ENCODE measurements at regions of chr9 and their contacts with region 1.

Region 1: DNA sequence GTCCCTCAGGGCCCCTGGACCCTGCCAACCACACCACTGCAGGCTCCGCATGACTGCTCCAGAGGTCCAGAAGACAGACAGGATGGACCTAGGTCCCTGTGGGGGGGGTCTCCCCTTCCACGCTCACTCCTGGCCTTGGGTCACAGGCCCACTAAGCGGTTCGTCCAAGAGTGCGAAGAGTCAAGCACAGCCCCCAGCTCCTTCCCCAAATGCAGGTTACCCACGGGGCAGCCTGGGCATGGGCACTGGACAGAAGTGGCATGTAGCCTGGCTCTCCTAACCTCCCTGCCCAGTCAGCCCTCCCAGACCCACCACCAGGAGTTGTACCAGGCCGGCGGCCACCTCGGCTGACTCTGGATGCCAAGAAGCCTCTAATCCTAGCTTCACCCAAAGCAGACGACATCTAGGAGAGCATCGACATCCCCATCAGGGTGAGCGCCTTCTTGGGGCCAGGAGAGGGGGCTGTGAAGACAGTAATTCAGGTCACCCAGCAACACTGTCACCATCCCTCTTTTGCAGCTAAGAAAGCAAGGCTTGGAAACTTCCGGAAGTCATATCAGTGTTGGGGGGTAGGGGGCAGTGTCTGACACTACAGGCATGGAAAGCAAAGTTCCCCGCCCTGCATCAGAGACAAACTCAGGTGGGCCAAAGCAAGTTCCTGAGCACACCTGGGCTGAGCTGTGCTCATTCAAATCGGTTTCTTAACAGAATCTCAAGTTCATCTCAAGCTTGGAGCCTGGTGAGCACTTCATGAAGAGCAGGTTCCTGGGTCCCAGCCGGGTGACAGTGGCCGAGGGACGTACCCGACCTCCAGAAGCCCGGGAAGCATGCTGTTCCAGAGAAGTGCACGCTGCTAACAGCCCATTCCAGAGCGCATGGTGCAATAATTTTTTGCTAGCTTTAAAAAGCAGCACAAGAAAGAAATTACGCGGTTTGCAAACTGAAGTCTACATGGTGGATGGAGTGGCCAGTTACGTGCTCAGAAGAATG is 68.7 kb downstream of the SEMA4D start:
- DNase-seq: peak; percentile 75
- ATAC-seq: peak; percentile 47
- H3K4me3 Mint-ChIP-seq: no peak overlapping the region
- H3K27ac Mint-ChIP-seq: peak overlapping the region; percentile 88
- H3K4me1 Mint-ChIP-seq: peaks cover 97% of the 10 kb centered on the region
- H3K27me3 Mint-ChIP-seq: no peaks in the 10 kb centered on the region

Region 2: DNA sequence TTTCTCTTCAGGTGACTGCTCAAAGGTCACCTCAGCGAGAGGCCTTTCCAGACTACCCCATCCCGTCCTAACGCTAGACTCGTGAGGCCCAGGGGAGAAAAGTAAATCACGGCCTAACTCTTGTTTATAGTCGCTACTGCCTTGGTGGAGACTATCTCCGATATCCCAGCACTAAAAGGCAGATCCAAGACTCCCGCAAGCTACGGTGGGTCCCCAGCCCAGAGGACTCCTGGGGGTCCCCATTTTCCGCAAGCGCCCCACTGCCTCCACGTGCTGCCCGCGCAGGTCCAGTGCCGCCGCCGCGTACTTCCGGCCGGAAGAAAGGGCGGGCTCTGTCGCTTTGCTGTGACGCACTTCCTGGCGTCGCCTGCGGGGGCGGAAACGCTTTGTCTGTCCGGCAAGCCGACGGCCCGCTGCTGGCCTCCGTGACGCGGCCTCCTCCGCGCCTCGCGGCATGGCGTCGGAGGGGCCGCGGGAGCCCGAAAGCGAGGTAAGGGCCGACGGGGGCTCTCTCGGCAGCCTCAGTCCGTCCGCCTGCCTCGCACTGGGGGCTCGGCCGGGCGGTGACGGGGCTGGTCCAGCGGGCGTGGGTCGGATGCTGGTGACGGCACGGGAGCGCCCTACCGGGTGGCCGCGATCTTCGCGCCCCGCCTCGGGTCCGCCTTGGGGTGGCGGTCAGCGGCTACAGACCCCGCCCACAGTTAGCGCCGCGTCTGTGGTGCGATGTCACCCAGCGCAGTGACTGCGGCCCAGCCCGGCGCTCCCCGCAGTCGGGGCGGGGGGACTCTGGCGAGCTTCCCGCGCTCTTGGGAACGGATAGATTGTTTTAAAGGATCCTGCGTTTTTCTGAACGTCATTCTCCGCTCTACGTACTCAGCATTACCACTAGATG is 110.8 kb before region 1 on chr9 and contains the start of gene SECISBP2:
- CTCF ChIA-PET with region 1: no interaction called
- POLR2A ChIA-PET with region 1: no interaction called
- intact Hi-C with region 1: loop called in 1 of 2 experiments (anchors 1 kb)
- DNase-seq: peak; percentile 97
- ATAC-seq: peak; percentile 90
- H3K4me3 Mint-ChIP-seq: peak within 1 kb of the TSS; percentile 82
- H3K27ac Mint-ChIP-seq: peak within 1 kb of the TSS; percentile 98
- H3K4me1 Mint-ChIP-seq: peaks cover 79% of the 10 kb centered on the region
- H3K27me3 Mint-ChIP-seq: no peaks in the 10 kb centered on the region
- total RNA-seq, gene SECISBP2: 38.6 to 49.9 TPM

Region 3: GRCh38 chr9:89418882-89419640 is 10.1 kb before region 1 on chr9:
- CTCF ChIA-PET with region 1: interaction called, 10 read pairs
- POLR2A ChIA-PET with region 1: interaction called, 3 read pairs
- intact Hi-C with region 1: loop called in 1 of 2 experiments (anchors 1 kb)
- DNase-seq: peak; percentile 85
- ATAC-seq: peak; percentile 22
- H3K4me3 Mint-ChIP-seq: peak overlapping the region; percentile 74
- H3K27ac Mint-ChIP-seq: peak overlapping the region; percentile 88
- H3K4me1 Mint-ChIP-seq: peaks cover 93% of the 10 kb centered on the region
- H3K27me3 Mint-ChIP-seq: no peaks in the 10 kb centered on the region

Region 4: DNA sequence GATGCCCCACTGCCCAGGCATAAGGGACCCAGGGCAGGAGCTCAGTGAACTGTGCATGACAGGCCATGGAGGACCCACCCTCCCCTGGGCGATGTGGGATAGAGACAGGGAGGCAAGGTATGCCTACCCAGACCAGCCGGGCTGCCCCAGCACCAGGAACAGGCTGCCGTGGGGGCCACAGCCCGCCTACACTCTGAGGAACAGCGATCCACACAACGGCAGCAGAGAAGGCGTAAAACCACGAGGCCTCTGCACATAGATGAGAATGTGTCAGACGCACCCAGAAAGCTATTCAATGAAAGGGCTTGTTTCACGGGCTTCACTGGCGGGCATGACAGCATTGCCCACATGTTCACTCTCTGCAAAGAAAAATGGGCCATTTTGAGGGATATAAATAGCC is 19.2 kb after region 1 on chr9:
- CTCF ChIA-PET with region 1: interaction called, 118 read pairs
- POLR2A ChIA-PET with region 1: interaction called, 10 read pairs
- intact Hi-C with region 1: no loop called
- DNase-seq: peak; percentile 75
- ATAC-seq: peak; percentile 76
- H3K4me3 Mint-ChIP-seq: peak overlapping the region; percentile 33
- H3K27ac Mint-ChIP-seq: peak overlapping the region; percentile 93
- H3K4me1 Mint-ChIP-seq: peaks cover 97% of the 10 kb centered on the region
- H3K27me3 Mint-ChIP-seq: no peaks in the 10 kb centered on the region

Region 5: GRCh38 chr9:89466451-89467277 is 37.5 kb after region 1 on chr9:
- CTCF ChIA-PET with region 1: interaction called, 9 read pairs
- POLR2A ChIA-PET with region 1: interaction called, 7 read pairs
- intact Hi-C with region 1: loop called in 1 of 2 experiments (anchors 1 kb)
- DNase-seq: peak; percentile 80
- ATAC-seq: peak; percentile 73
- H3K4me3 Mint-ChIP-seq: peak overlapping the region; percentile 62
- H3K27ac Mint-ChIP-seq: peak overlapping the region; percentile 95
- H3K4me1 Mint-ChIP-seq: peaks cover 96% of the 10 kb centered on the region
- H3K27me3 Mint-ChIP-seq: no peaks in the 10 kb centered on the region

Region 6: DNA sequence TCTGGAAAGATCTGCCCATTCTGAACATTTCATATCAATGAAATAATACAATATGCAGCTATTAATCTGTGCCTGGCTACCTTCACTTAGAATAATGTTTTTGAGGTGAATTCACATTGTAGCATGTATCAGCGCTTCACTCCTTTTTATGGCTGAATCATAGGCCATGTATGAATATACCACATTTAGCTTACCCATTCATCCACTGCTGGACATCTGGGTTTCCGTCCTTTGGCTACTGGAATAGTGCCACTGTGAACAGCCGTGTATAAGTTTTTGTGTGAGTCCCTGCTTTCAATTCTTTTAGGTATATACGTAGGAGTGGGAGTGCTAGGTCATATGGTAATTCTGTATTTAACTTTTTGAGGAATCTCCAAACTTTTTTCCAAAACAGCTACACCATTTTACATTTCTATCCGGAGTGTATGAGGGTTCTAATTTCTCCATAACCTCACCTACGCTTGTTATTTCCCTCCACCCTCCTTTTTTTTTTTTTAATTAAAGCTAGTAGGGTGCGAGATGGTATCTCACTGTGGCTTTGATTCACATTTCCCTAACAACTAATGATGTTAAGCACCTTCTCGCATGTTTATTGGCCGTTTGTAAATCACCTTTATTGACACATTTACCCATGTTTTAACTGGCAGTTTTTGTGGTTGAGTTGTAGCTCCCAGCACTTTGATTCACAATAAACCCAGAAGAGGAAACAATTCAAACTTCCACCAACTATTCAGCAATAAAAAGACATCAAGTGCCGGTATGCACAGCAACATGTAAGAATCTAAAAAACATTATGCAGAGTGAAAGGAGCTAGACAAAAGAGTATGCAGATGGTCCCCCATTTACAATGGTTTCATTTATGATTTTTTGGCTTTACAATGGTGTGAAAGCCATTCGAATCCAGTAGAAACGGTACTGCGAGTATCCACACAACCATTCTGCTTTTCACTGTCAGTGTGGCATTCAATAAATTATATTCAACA is 60.6 kb after region 1 on chr9:
- CTCF ChIA-PET with region 1: interaction called, 21 read pairs
- POLR2A ChIA-PET with region 1: interaction called, 4 read pairs
- intact Hi-C with region 1: no loop called
- DNase-seq: no peak
- ATAC-seq: peak; percentile 45
- H3K4me3 Mint-ChIP-seq: peak overlapping the region; percentile 51
- H3K27ac Mint-ChIP-seq: peak overlapping the region; percentile 87
- H3K4me1 Mint-ChIP-seq: peaks cover 95% of the 10 kb centered on the region
- H3K27me3 Mint-ChIP-seq: no peaks in the 10 kb centered on the region

Region 7: DNA sequence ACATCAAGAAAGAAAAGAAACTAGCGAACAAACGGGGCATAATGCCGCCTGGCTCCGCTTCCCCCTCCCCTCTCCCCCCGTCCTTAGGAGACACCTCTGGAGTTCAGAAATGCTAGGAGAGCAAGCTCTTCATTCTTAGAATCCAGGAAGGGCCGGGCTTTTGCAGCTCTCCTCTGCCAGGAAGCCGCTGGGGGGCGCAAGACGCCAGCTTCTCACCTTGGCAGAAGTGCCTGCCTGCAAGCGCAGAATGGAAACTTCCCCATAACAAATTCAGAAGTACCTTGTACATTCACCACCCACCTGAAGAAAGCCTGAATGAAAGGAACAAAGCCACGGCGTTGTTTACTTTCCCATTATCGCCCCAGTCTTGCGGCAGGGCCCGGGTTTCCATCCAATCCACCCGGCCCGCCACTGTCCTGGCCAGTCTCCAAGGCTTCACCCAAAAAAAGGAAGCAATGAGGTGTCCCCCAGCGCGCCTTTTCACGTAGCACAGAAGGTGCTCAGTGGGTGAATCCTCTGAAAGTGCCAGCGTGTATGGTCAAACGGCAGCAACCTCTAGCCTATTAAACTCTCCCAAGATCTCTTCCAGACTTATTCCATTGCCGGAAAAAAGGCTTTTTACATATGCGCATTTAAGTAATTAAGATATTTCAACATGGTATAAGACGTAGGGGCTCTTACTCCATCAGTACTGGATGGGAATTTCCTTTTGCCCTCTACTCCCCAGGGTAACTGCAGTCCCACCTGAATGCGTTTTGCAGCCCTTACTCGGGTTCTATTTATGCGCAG is 174.0 kb after region 1 on chr9:
- CTCF ChIA-PET with region 1: no interaction called
- POLR2A ChIA-PET with region 1: no interaction called
- intact Hi-C with region 1: loop called in 1 of 2 experiments (anchors 1 kb)
- DNase-seq: peak; percentile 95
- ATAC-seq: peak; percentile 23
- H3K4me3 Mint-ChIP-seq: peak overlapping the region; percentile 66
- H3K27ac Mint-ChIP-seq: no peak overlapping the region
- H3K4me1 Mint-ChIP-seq: peaks cover 33% of the 10 kb centered on the region
- H3K27me3 Mint-ChIP-seq: no peaks in the 10 kb centered on the region

Region 8: GRCh38 chr9:89969156-89969675 is 540.0 kb after region 1 on chr9:
- CTCF ChIA-PET with region 1: no interaction called
- POLR2A ChIA-PET with region 1: no interaction called
- intact Hi-C with region 1: no loop called
- DNase-seq: peak; percentile 59
- ATAC-seq: peak; percentile 93
- H3K4me3 Mint-ChIP-seq: no peak overlapping the region
- H3K27ac Mint-ChIP-seq: no peak overlapping the region
- H3K4me1 Mint-ChIP-seq: peaks cover 29% of the 10 kb centered on the region
- H3K27me3 Mint-ChIP-seq: peaks cover 3% of the 10 kb centered on the region

Measured in activated CD4-positive, alpha-beta T cell treated with anti-CD3 and anti-CD28 coated beads for 36 hours (primary cell).